ENCODE measurements at regions of chr3 and their contacts with region 1.

Region 1: GRCh38 chr3:42012935-42013690 is 51.2 kb upstream of the ULK4 start:
- DNase-seq: peak in 1 of 2 donors; percentile 57
- H3K4me3 ChIP-seq: peak overlapping the region; percentile 61 to 91 (median 78)
- H3K27ac ChIP-seq: peak overlapping the region; percentile 93 to 94
- H3K4me1 ChIP-seq: no peaks in the 10 kb centered on the region
- H3K27me3 ChIP-seq: no peaks in the 10 kb centered on the region
- CTCF ChIP-seq: peak in 1 of 3 donors; percentile 28
- POLR2A ChIP-seq: no peak

Region 2: GRCh38 chr3:42090973-42091731 is 78.0 kb after region 1 on chr3 and contains the start of gene TRAK1:
- intact Hi-C with region 1: loop called (anchors 10 kb)
- DNase-seq: peak in 1 of 2 donors; percentile 72
- H3K4me3 ChIP-seq: peak within 1 kb of the TSS; percentile 32 to 61 (median 43)
- H3K27ac ChIP-seq: peak within 1 kb of the TSS; percentile 84
- H3K4me1 ChIP-seq: peaks cover 0 to 4% of the 10 kb centered on the region in 2 donors
- H3K27me3 ChIP-seq: no peaks in the 10 kb centered on the region
- CTCF ChIP-seq: no peak
- POLR2A ChIP-seq: no peak
- total RNA-seq, gene TRAK1: 29.0 to 53.7 (median 40.6) TPM

Region 3: GRCh38 chr3:42336103-42336502 is 323.0 kb after region 1 on chr3:
- intact Hi-C with region 1: loop called (anchors 5 kb)
- DNase-seq: no peak
- H3K4me3 ChIP-seq: no peak overlapping the region
- H3K27ac ChIP-seq: no peak overlapping the region
- H3K4me1 ChIP-seq: no peaks in the 10 kb centered on the region
- H3K27me3 ChIP-seq: no peaks in the 10 kb centered on the region
- CTCF ChIP-seq: no peak
- POLR2A ChIP-seq: no peak